ENCODE measurements at regions of chr5 and their contacts with region 1.

Region 1: GRCh38 chr5:33524476-33524875 is 83.7 kb downstream of the TARS1 start:
- DNase-seq: no peak
- ATAC-seq: no peak
- H3K4me3 ChIP-seq: no peak overlapping the region
- H3K27ac ChIP-seq: no peak overlapping the region
- H3K4me1 ChIP-seq: no peaks in the 10 kb centered on the region
- H3K27me3 ChIP-seq: no peaks in the 10 kb centered on the region
- CTCF ChIP-seq: no peak

Region 2: DNA sequence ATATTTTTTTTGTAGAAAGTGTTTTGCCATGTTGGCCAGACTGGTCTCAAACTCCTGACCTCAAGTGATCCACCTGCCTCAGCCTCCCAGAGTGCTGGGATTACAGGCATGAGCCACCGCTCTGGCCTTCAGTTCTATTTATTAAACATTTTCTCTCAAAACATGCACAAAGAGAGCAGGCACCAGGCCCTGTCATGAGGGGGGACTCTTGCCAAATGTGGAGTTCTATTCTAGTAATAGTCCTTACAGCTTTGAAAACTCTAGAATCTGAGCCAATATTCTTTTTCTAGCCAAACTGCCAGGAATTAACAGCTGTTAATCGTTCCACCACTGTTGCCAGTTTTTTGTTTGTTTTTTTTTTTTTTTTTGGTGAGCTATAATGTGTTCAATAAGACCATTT is 40.8 kb after region 1 on chr5:
- intact Hi-C with region 1: no loop called
- DNase-seq: peak; percentile 23 to 51
- ATAC-seq: peak in 1 of 4 donors; percentile 29
- H3K4me3 ChIP-seq: no peak overlapping the region
- H3K27ac ChIP-seq: no peak overlapping the region
- H3K4me1 ChIP-seq: no peaks in the 10 kb centered on the region
- H3K27me3 ChIP-seq: no peaks in the 10 kb centered on the region
- CTCF ChIP-seq: no peak

Region 3: DNA sequence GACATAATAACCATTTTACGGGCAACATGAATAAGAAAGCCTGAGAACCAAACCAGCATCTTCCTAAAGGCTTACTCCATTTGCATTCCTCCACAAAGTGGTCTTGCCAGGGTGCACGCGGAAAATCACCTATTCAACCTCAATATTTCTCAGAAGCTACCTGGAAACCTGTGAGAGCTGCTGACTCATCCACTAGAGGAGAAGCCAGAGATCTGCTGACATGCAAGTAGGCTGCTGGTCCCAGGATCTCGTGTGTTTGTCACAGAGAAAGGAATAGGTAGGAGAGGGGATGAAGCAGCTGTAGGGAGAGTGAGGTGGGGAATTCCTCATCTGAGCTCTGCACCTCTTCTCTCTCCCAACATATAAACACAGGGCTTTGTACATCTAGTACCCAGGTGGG is 229.2 kb after region 1 on chr5:
- intact Hi-C with region 1: loop called in 1 of 2 experiments (anchors 5 kb)
- DNase-seq: no peak
- ATAC-seq: no peak
- H3K4me3 ChIP-seq: no peak overlapping the region
- H3K27ac ChIP-seq: no peak overlapping the region
- H3K4me1 ChIP-seq: no peaks in the 10 kb centered on the region
- H3K27me3 ChIP-seq: no peaks in the 10 kb centered on the region
- CTCF ChIP-seq: no peak

Measured in psoas muscle (tissue), 8 donors.